Posterior vena cava (tissue), 2 donors: ENCODE measurements at regions of chr9 and their contacts with region 1.

Region 1: GRCh38 chr9:133869674-133870405 is 122.3 kb downstream of the VAV2 start:
- DNase-seq: no peak

Region 2: DNA sequence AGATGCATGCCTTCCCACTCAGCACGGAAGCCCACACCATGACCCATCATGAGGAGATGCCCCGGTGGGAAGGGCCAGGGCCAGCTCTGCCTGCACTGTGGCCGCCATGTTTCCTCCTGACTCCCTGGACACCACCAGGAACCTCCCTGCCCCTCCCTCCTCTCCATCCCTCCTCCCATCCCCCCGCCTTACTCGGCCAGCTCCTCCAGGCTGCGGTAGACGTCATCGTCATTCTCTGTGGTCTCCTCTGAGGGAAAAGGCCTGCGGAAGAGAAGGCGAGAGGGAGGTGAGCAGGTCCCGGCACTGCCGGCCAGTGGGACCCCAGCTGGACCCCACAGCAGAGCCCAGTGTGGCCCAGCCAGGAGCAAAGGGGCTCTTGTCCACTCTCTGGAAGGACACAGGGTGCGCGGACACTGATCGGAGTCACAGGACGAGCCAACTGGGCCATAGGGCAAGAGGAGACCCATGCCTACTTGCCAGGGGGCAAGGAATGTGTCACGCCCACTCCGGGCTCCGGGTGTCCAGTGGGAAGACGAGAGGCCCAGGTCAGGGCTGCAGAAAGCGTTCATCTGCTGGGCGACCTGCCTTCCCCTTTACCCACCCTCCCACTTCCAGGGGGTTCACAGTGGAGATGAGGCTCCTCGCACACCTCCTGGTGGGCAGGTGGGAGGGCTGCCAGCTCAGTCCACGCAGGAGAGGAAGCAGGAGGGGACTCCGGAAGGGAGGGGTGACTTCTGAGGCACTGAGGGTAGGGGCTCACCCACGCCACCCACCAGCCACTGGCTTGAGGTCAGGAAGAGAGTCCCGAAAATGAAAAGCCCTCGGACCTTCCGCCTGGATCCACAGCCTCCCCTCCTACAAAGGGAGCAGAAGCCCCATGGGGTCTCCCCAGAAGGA is 35.5 kb before region 1 on chr9:
- intact Hi-C with region 1: loop called in 1 of 2 experiments (anchors 1 kb)
- DNase-seq: no peak